Caco-2 (cell line): ENCODE measurements at regions of chr1 and their contacts with region 1.

Region 1: GRCh38 chr1:231528172-231529029 is at the start of gene TSNAX:
- DNase-seq: peak; percentile 93 to 95
- H3K4me3 ChIP-seq: peak within 1 kb of the TSS; percentile 88
- H3K4me3 Mint-ChIP-seq: peak within 1 kb of the TSS; percentile 94
- H3K27ac Mint-ChIP-seq: peak within 1 kb of the TSS; percentile 98
- H3K4me1 ChIP-seq: 0 out of 2 replicates have a peak, but pooled peaks cover 5% of the 10 kb centered on the region
- H3K4me1 Mint-ChIP-seq: peaks cover 7% of the 10 kb centered on the region
- H3K27me3 ChIP-seq: no peaks in the 10 kb centered on the region
- H3K27me3 Mint-ChIP-seq: no peaks in the 10 kb centered on the region
- CTCF ChIP-seq: no peak
- total RNA-seq, gene TSNAX: 37.0 and 39.0 TPM in 2 replicates

Region 2: GRCh38 chr1:231337472-231338269 is 190.7 kb before region 1 on chr1 and contains the start of gene EXOC8:
- CTCF ChIA-PET with region 1: no interaction called
- POLR2A ChIA-PET with region 1: interaction called, 10 read pairs
- intact Hi-C with region 1: no loop called
- DNase-seq: peak; percentile 95 to 98
- H3K4me3 ChIP-seq: peak within 1 kb of the TSS; percentile 88
- H3K4me3 Mint-ChIP-seq: peak within 1 kb of the TSS; percentile 98
- H3K27ac Mint-ChIP-seq: peak within 1 kb of the TSS; percentile 98
- H3K4me1 ChIP-seq: peaks cover 6% of the 10 kb centered on the region
- H3K4me1 Mint-ChIP-seq: peaks cover 25% of the 10 kb centered on the region
- H3K27me3 ChIP-seq: no peaks in the 10 kb centered on the region
- H3K27me3 Mint-ChIP-seq: peaks cover 2% of the 10 kb centered on the region
- CTCF ChIP-seq: no peak
- total RNA-seq, gene EXOC8: 17.2 and 18.3 TPM in 2 replicates

Region 3: GRCh38 chr1:231500666-231501065 is 27.7 kb before region 1 on chr1:
- CTCF ChIA-PET with region 1: no interaction called
- POLR2A ChIA-PET with region 1: no interaction called
- intact Hi-C with region 1: no loop called
- DNase-seq: no peak
- H3K4me3 ChIP-seq: no peak overlapping the region
- H3K4me3 Mint-ChIP-seq: no peak overlapping the region
- H3K27ac Mint-ChIP-seq: no peak overlapping the region
- H3K4me1 ChIP-seq: no peaks in the 10 kb centered on the region; the same call in 1 of the 2 replicates
- H3K4me1 Mint-ChIP-seq: no peaks in the 10 kb centered on the region
- H3K27me3 ChIP-seq: no peaks in the 10 kb centered on the region
- H3K27me3 Mint-ChIP-seq: no peaks in the 10 kb centered on the region
- CTCF ChIP-seq: no peak

Region 4: DNA sequence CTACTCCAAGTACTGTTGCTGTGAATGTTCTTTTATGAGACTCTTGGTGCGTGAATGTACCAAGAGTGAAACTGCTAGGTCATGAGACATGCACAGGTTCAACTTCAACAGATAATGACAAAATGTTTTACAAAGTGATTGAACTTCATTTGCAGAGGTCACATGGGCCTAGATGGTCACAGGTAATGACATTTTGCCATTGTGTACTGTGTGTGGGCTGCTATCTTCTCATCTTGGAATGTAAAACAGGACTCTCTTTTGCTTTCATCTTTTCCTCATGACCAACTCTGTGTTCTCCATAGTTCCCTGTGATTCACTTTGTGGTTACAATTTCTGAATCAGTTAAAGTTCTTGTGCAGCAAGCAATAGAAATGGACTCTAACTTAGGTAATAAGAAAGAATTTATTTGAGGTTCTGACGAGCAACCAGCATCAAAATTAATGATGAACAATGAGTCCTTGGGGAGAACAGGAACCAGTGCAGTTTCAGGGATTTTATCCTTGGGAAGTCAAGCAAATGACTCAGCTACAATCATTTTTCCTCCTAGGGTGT is 16.2 kb before region 1 on chr1:
- CTCF ChIA-PET with region 1: no interaction called
- POLR2A ChIA-PET with region 1: no interaction called
- intact Hi-C with region 1: loop called (anchors 1 kb)
- DNase-seq: peak; percentile 37 to 39
- H3K4me3 ChIP-seq: no peak overlapping the region
- H3K4me3 Mint-ChIP-seq: peak overlapping the region; percentile 8
- H3K27ac Mint-ChIP-seq: peak overlapping the region; percentile 34
- H3K4me1 ChIP-seq: peaks cover 33% of the 10 kb centered on the region
- H3K4me1 Mint-ChIP-seq: peaks cover 41% of the 10 kb centered on the region
- H3K27me3 ChIP-seq: no peaks in the 10 kb centered on the region
- H3K27me3 Mint-ChIP-seq: no peaks in the 10 kb centered on the region
- CTCF ChIP-seq: no peak